Right cardiac atrium (tissue), 5 donors: ENCODE measurements at regions of chr5 and their contacts with region 1.

Region 1: DNA sequence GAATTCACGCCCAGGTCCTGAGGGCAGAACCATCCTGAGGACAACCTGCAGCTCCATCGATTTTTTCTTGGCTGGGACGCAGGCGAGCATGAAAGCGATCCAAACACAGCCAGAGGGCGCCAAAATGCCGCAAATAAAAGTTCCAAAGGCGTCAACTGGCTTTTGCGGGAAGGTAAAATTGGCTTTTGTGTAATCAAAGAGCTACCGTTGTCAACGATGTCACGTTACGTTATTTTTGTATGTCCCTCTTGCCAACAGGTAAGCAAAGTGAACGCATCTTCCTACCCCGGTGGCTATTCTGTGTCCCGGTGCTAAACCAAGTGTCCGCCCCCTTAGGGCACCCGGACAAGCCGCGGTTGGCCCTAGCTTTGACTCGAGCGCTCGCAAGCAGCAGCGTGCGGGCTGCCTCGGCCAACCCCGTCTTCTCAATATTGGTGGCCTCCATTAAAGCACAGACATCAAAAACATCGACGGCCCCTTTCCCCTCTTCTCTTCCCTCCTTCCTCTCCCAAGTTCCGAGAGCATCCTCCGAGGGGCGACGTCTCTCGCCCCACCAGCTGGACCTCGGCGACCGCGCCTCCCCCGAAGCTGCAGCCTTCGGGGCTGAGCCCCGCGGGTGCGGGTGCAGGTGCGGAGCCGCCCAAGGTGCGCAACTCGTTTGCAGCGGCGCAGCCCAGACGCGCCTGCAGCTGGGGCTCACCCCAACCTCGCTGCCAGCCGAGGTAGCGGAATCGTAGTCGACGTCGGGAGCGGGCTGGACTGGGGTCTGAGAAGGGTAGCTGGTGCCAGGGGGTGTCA is 1.1 kb upstream of the BASP1 start:
- DNase-seq: peak; percentile 71 to 86 (median 78)
- ATAC-seq: peak; percentile 69 to 71
- H3K4me3 ChIP-seq: no peak overlapping the region
- H3K27ac ChIP-seq: no peak overlapping the region
- H3K4me1 ChIP-seq: no peaks in the 10 kb centered on the region
- H3K27me3 ChIP-seq: no peaks in the 10 kb centered on the region

Region 2: DNA sequence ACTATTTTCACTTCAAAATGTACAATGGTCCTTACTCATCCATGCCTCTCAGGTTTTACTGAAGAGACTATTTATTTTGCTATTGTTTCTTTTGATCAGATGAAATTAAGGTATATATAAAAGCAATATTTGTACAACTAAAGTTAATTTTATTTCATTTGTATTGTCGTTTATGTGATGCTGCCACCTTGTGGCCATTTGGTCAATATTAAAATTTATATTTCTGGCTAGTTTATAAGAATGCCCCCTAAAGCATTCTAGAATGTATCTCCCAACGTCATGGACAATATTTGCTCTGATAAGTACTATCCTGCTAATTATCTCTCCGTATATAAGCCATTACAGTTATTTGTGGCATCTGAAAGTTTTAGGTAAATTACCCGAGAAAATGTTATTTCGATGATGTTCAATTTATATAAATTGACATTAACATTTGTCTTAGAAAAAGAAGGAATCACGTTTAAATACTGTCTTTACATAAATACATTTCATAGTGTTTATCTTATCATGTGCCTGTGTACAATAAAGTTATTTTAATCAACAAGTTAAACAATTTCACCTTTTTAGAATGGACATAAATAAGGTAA is 1097.9 kb after region 1 on chr5:
- intact Hi-C with region 1: loop called in 2 of 4 experiments (anchors 5 kb)
- DNase-seq: no peak
- ATAC-seq: no peak
- H3K4me3 ChIP-seq: no peak overlapping the region
- H3K27ac ChIP-seq: no peak overlapping the region
- H3K4me1 ChIP-seq: no peaks in the 10 kb centered on the region
- H3K27me3 ChIP-seq: no peaks in the 10 kb centered on the region